GM12878 (cell line): ENCODE measurements at regions of chr3 and their contacts with region 1.

Region 1: GRCh38 chr3:180626844-180627243 is 24.9 kb downstream of the TTC14 start:
- DNase-seq: peak; percentile 45
- ATAC-seq: peak; percentile 93
- H3K4me3 ChIP-seq: no peak overlapping the region
- H3K27ac ChIP-seq: peak overlapping the region; percentile 69
- H3K4me1 ChIP-seq: peaks cover 25% of the 10 kb centered on the region
- H3K27me3 ChIP-seq: no peaks in the 10 kb centered on the region
- CTCF ChIP-seq: no peak
- EP300 ChIP-seq: 0 out of 4 replicates have a peak, but pooled peaks of 1 of the 2 experiments have one; percentile 46
- POLR2A ChIP-seq: no peak
- RAD21 ChIP-seq: no peak

Region 2: GRCh38 chr3:180571831-180572598 is 54.8 kb before region 1 on chr3:
- CTCF ChIA-PET with region 1: no interaction called
- POLR2A ChIA-PET with region 1: no interaction called
- RAD21 ChIA-PET with region 1: no interaction called
- SMC1A ChIA-PET with region 1: no interaction called
- in situ Hi-C with region 1: no loop called
- intact Hi-C with region 1: no loop called
- DNase-seq: no peak
- ATAC-seq: peak; percentile 94
- H3K4me3 ChIP-seq: no peak overlapping the region
- H3K27ac ChIP-seq: no peak overlapping the region; the same call in 1 of the 2 replicates
- H3K4me1 ChIP-seq: no peaks in the 10 kb centered on the region
- H3K27me3 ChIP-seq: no peaks in the 10 kb centered on the region
- CTCF ChIP-seq: no peak
- EP300 ChIP-seq: no peak
- POLR2A ChIP-seq: no peak
- RAD21 ChIP-seq: no peak

Region 3: GRCh38 chr3:180679178-180680096 is 52.6 kb after region 1 on chr3 and contains the start of gene CCDC39:
- CTCF ChIA-PET with region 1: interaction called, 5 read pairs
- POLR2A ChIA-PET with region 1: no interaction called
- RAD21 ChIA-PET with region 1: no interaction called
- SMC1A ChIA-PET with region 1: interaction called, 3 read pairs
- in situ Hi-C with region 1: no loop called
- intact Hi-C with region 1: loop called (anchors 5 kb)
- DNase-seq: peak; percentile 30
- ATAC-seq: peak; percentile 96
- H3K4me3 ChIP-seq: peak within 1 kb of the TSS; percentile 82
- H3K27ac ChIP-seq: no peak within 1 kb of the TSS
- H3K4me1 ChIP-seq: peaks cover 4% of the 10 kb centered on the region; the same call in 1 of the 2 replicates
- H3K27me3 ChIP-seq: no peaks in the 10 kb centered on the region
- CTCF ChIP-seq: no peak
- EP300 ChIP-seq: no peak
- POLR2A ChIP-seq: no peak
- RAD21 ChIP-seq: no peak
- polyA plus RNA-seq, gene CCDC39: 0.32 to 0.38 TPM

Region 4: GRCh38 chr3:180912304-180913296 is 285.8 kb after region 1 on chr3 and contains the start of gene FXR1:
- CTCF ChIA-PET with region 1: no interaction called
- POLR2A ChIA-PET with region 1: no interaction called
- RAD21 ChIA-PET with region 1: no interaction called
- SMC1A ChIA-PET with region 1: no interaction called
- in situ Hi-C with region 1: no loop called
- intact Hi-C with region 1: loop called (anchors 10 kb)
- DNase-seq: peak; percentile 66
- ATAC-seq: peak; percentile 99
- H3K4me3 ChIP-seq: peak within 1 kb of the TSS; percentile 97
- H3K27ac ChIP-seq: peak within 1 kb of the TSS; percentile 97
- H3K4me1 ChIP-seq: no peaks in the 10 kb centered on the region
- H3K27me3 ChIP-seq: no peaks in the 10 kb centered on the region
- CTCF ChIP-seq: peak; percentile 72 to 82 (median 80)
- EP300 ChIP-seq: no peak
- POLR2A ChIP-seq: peak; percentile 89
- RAD21 ChIP-seq: peak; percentile 44
- polyA plus RNA-seq, gene FXR1: 46.0 to 62.9 TPM